A673 (cell line): ENCODE measurements at regions of chr4 and their contacts with region 1.

Region 1: GRCh38 chr4:38902695-38903094 is 35.1 kb downstream of the FAM114A1 start:
- DNase-seq: peak; percentile 54
- H3K4me3 ChIP-seq: no peak overlapping the region
- H3K27ac ChIP-seq: no peak overlapping the region
- H3K4me1 ChIP-seq: no peaks in the 10 kb centered on the region
- H3K27me3 ChIP-seq: no peaks in the 10 kb centered on the region
- CTCF ChIP-seq: peak; percentile 57

Region 2: GRCh38 chr4:38782452-38783108 is 120.1 kb before region 1 on chr4 and contains the start of gene TLR10:
- CTCF ChIA-PET with region 1: no interaction called
- POLR2A ChIA-PET with region 1: no interaction called
- intact Hi-C with region 1: no loop called
- DNase-seq: peak; percentile 46
- H3K4me3 ChIP-seq: no peak within 1 kb of the TSS
- H3K27ac ChIP-seq: no peak within 1 kb of the TSS
- H3K4me1 ChIP-seq: no peaks in the 10 kb centered on the region
- H3K27me3 ChIP-seq: no peaks in the 10 kb centered on the region
- CTCF ChIP-seq: peak; percentile 65
- total RNA-seq, gene TLR10: not detected in 2 replicates

Region 3: DNA sequence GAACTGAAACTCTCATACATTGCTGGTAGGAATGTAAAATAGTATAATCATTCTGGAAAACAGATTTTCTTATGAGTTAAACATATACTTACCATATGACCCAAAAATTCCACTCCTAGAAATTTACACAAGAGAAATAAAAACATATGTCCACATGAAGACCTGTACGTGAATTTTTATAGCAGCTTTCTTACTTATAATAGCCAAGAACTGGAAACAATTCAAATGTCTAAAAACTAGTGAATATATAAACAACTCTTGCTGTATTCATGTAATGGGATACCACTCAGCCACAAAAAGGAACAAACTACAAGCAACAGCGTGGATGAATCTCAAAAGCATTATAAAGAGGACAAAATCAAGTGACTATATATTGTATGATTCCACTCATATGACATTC is 102.1 kb after region 1 on chr4:
- CTCF ChIA-PET with region 1: no interaction called
- POLR2A ChIA-PET with region 1: no interaction called
- intact Hi-C with region 1: no loop called
- DNase-seq: no peak
- H3K4me3 ChIP-seq: no peak overlapping the region
- H3K27ac ChIP-seq: no peak overlapping the region
- H3K4me1 ChIP-seq: no peaks in the 10 kb centered on the region
- H3K27me3 ChIP-seq: no peaks in the 10 kb centered on the region
- CTCF ChIP-seq: no peak

Region 4: GRCh38 chr4:39134683-39135319 is 232.1 kb after region 1 on chr4:
- CTCF ChIA-PET with region 1: interaction called, 24 read pairs
- POLR2A ChIA-PET with region 1: no interaction called
- intact Hi-C with region 1: loop called (anchors 1 kb)
- DNase-seq: peak; percentile 45
- H3K4me3 ChIP-seq: no peak overlapping the region
- H3K27ac ChIP-seq: no peak overlapping the region
- H3K4me1 ChIP-seq: peaks cover 8% of the 10 kb centered on the region
- H3K27me3 ChIP-seq: no peaks in the 10 kb centered on the region
- CTCF ChIP-seq: no peak

Region 5: DNA sequence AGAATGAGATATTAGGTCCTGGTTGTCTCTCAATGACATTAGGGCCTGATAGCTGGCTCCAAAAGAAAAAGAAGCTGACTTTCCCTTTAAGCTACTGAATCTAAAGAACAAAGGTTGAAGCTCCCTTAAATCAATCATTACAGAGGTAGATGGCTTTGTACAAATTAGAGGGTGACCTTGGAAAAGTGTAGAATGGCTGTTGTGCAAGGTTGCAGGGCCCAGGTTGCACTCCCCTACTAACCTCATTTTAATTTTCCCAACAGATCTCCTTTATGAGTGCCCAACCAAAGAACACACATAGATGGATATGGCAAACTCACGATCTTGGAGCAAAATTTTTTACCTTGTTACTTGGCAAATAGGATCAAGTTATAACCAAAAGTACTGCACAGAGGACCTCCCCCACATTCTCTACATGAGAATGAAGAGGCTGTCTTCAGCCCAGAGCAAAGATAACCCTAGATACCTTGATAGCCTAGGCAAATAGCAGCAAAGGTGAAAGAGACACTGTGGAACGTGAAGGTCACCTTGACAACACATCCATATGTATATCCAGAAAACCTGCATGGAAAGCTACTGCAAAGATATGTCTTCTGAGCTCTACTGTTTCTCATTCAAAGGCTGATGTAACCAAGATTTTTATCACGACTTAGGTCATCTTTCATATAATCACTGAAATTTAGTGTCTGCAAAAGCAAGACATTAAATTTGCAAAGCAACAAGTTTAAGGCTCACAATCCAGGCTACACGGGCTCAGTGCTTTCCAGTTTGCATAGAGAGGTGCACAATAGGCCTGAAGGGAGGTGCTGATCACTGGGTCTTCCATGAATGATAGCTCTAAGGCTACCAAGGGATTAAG is 527.0 kb after region 1 on chr4:
- CTCF ChIA-PET with region 1: interaction called, 4 read pairs
- POLR2A ChIA-PET with region 1: no interaction called
- intact Hi-C with region 1: loop called (anchors 10 kb)
- DNase-seq: no peak
- H3K4me3 ChIP-seq: no peak overlapping the region
- H3K27ac ChIP-seq: no peak overlapping the region
- H3K4me1 ChIP-seq: no peaks in the 10 kb centered on the region
- H3K27me3 ChIP-seq: no peaks in the 10 kb centered on the region
- CTCF ChIP-seq: no peak